Dorsolateral prefrontal cortex (tissue), 120 donors: ENCODE measurements at regions of chr1 and their contacts with region 1.

Region 1: DNA sequence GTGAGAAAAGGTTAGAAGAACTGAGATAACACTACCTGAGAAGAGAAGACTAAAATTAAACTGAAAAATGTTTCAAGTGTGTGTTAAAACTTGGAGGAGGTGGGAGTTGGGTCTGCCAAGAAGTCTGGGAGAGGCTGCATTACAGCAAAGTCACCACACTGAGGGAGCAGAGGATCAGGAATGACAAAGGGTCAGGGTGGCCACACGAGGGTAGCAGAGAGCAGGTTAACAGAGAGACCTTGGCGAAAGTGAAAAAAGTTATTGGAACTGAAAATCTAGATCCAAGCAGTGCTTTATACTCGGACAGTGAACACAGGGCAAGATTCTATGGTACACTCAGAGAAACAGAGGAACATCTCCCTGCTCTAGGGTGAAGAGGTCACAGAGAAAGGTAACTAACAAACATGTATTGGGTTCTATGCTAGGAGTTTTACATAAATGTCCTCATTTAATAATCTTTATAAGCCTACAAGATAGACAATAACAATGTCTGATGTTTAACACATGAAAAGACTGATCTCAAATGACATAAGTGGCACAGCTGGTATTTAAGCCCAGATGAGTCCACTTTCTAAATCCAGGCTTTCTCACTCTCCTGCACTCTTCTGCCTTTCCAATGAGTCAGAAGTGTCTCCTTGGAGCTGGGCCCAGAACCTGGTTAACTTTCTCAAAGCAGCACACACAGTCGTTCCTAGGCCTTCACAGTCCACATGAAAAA is 10.3 kb upstream of the CADM3 start:
- DNase-seq: peak; percentile 43 to 80 (median 75)
- H3K4me3 ChIP-seq: no peak overlapping the region
- H3K27ac ChIP-seq: peak overlapping the region in 8 of 59 donors; percentile 10 to 76 (median 59)
- H3K27me3 ChIP-seq: peaks cover 0 to 12% (median 0%) of the 10 kb centered on the region in 45 donors
- CTCF ChIP-seq: peak; percentile 74 to 100 (median 98)

Region 2: DNA sequence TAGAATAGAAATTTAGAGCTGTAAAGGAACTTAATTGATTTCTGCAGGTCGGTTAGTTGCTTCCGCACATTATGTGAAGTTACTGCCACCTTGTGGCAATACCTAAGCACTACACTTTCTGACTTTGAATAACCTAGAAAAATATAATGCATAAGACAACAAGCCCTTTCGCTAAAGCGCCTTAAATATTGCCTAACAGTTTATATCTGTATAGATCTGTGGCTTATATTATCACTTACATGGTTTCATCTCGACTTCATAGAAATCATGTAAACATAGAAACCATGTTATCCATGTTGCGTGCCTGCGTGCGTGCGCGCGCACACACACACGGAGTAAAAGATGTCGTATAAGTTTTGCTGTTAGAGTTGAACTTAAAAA is 162.4 kb before region 1 on chr1:
- intact Hi-C with region 1: no loop called
- DNase-seq: peak in 7 of 10 donors; percentile 38 to 66 (median 64)
- H3K4me3 ChIP-seq: peak overlapping the region; percentile 24 to 72 (median 60)
- H3K27ac ChIP-seq: peak overlapping the region; percentile 72 to 99 (median 95)
- H3K27me3 ChIP-seq: peaks cover 0 to 5% (median 0%) of the 10 kb centered on the region in 45 donors
- CTCF ChIP-seq: peak; percentile 86 to 100 (median 97)

Region 3: DNA sequence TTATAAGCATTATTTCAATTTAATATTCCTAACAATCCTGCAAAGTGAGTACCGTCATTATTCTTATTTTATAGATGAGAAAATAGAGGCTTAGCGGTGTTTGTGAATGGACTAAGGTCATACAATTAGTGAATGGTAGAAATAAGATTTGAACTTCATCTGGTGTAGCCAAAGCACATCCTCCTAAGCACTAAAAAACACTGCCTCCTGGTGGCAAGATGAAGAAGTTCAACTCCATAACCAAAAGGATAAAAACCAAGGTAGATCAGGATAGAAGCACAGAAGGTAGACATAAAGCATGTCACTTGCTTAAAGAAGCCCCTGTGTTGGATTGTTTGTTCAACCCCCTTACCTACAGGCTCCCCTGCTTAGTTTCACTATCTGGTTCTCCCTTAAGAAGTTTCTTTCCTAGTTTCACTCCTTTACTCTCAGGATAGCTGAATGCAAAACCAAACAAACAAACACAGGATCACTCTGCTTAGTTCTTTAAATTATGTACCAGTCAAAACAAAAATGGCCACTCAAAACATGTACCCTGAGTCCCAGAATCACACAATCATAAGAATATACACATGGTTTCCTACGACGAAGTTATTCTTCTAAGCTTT is 71.9 kb before region 1 on chr1:
- intact Hi-C with region 1: no loop called
- DNase-seq: no peak
- H3K4me3 ChIP-seq: no peak overlapping the region
- H3K27ac ChIP-seq: no peak overlapping the region
- H3K27me3 ChIP-seq: no peaks in the 10 kb centered on the region
- CTCF ChIP-seq: peak in 54 of 56 donors; percentile 23 to 62 (median 45)

Region 4: DNA sequence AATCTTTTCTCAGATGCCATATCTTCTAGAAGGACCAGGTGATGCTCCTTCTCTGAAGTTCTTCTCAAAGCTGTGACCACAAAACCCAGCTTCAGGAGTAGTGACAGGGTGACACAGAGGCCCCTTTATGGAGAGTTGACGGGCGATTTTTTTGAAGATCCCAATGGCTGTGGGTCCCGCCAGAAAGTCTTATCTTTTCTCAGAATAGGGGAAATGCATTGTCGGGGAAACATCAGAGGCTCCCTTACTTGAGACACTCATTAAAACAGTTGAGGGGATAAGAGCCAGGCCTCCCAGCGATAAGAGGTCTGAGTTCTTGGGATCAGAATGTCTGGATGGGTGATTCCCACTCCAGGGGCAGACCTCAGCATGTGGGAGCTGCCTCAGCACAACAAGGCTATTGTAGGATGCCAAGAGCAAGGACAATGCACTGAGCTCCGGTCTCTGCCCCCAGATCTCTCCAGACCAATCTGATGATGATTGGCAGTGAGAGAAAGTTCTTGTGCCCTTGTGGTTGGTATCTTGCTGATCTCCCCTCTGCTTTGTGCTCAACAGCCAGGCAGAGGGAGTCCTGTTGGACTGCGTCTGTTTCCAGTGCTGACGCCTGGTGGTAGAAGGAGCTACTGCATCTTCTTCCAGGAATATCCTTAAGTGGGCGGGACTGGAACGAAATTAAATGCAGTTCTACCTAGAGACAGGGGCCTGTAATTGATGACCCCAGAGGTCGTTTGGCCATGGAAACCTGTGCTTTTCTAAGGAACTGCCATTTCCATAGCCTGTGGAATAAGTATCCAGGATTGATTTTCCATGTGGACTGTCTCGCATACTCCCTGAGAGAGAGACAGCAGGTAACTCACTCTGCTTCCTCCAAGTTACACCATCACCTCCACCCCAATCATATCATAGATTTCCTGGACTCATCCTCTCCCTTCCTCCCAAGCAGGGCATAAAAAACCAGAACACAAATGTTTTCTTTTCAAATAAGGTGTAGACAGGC is 36.7 kb after region 1 on chr1:
- intact Hi-C with region 1: loop called (anchors 1 to 5 kb)
- DNase-seq: peak in 9 of 10 donors; percentile 31 to 86 (median 77)
- H3K4me3 ChIP-seq: no peak overlapping the region
- H3K27ac ChIP-seq: peak overlapping the region in 4 of 59 donors; percentile 15 to 28 (median 18)
- H3K27me3 ChIP-seq: peaks cover 0 to under 1% (median 0%) of the 10 kb centered on the region in 45 donors
- CTCF ChIP-seq: peak; percentile 71 to 95 (median 89)